Naive thymus-derived CD4-positive, alpha-beta T cell (primary cell): ENCODE measurements at regions of chr12 and their contacts with region 1.

Region 1: DNA sequence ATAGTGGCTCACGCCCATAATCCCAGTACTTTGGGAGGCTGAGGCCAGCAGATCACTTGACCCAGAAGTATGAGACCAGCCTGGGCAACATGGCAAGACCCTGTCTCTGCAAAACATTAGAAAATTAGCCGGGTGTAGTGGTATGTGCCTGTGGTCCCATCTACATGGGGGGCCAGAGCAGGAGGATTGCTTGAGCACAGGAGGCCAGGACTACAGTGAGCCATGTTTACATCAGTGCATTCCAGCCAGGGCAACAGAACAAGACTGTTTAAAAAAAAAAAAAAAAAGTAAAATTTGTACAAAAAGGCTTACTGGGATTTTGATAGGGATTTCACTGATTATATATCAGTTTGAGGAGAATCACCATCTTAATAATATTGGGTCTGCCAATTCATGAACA is 7.8 kb downstream of the HCFC2 start:
- DNase-seq: no peak
- ATAC-seq: no peak
- H3K4me3 ChIP-seq: no peak overlapping the region
- H3K4me3 Mint-ChIP-seq: no peak overlapping the region
- H3K27ac ChIP-seq: no peak overlapping the region
- H3K27ac Mint-ChIP-seq: no peak overlapping the region
- H3K4me1 ChIP-seq: no peaks in the 10 kb centered on the region
- H3K4me1 Mint-ChIP-seq: peaks cover 5 to 34% (median 30%) of the 10 kb centered on the region in 7 donors
- H3K27me3 ChIP-seq: no peaks in the 10 kb centered on the region
- H3K27me3 Mint-ChIP-seq: no peaks in the 10 kb centered on the region

Region 2: DNA sequence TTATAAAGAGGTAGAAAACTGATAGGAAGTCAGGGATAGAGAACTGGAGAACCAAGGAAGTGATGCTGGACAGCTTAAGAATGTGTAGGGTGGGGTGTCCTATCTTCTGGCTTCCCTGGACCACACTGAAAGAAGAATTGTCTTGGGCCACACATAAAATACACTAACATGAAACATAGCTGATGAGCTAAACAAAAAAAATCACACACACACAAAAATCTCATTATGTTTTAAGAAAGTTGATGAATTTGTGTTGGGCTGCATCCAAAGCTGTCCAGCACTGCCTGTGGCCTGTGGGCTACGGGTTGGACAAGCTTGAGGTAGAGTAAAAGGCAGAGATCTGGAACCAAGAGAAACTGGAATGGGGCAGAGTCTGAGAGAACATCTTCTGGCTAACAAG is 29.5 kb before region 1 on chr12:
- CTCF ChIA-PET with region 1: no interaction called
- POLR2A ChIA-PET with region 1: no interaction called
- intact Hi-C with region 1: no loop called
- DNase-seq: no peak
- ATAC-seq: no peak
- H3K4me3 ChIP-seq: no peak overlapping the region
- H3K4me3 Mint-ChIP-seq: no peak overlapping the region
- H3K27ac ChIP-seq: no peak overlapping the region
- H3K27ac Mint-ChIP-seq: peak overlapping the region in 1 of 9 donors; percentile 3
- H3K4me1 ChIP-seq: no peaks in the 10 kb centered on the region
- H3K4me1 Mint-ChIP-seq: peaks cover 0 to 3% (median 0%) of the 10 kb centered on the region in 7 donors
- H3K27me3 ChIP-seq: no peaks in the 10 kb centered on the region
- H3K27me3 Mint-ChIP-seq: peaks cover 0 to 17% (median 0%) of the 10 kb centered on the region in 5 donors

Region 3: DNA sequence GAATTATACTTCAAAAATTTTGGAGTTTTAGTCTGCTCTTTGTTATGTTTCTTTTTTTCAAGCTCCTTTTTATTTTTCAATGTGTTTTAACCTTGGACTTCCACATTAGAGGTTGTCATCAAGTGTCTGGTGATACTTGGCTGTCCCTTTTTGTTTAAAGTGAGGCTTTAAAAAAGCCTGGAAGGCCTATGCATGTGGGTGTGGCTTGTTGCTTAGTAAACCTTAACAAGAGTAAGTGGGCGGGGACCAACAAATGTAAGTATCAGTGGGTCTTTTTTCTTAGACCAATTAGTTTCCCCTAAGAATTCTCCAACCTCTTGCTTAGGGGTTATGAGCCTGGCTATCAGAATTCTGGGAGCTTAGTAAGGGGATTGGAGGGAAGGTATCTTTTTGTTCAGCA is 18.6 kb after region 1 on chr12:
- CTCF ChIA-PET with region 1: no interaction called
- POLR2A ChIA-PET with region 1: no interaction called
- intact Hi-C with region 1: loop called in 1 of 2 experiments (anchors 2 kb)
- DNase-seq: no peak
- ATAC-seq: no peak
- H3K4me3 ChIP-seq: no peak overlapping the region
- H3K4me3 Mint-ChIP-seq: no peak overlapping the region
- H3K27ac ChIP-seq: no peak overlapping the region
- H3K27ac Mint-ChIP-seq: no peak overlapping the region
- H3K4me1 ChIP-seq: no peaks in the 10 kb centered on the region
- H3K4me1 Mint-ChIP-seq: peaks cover 0 to 1% (median 0%) of the 10 kb centered on the region in 7 donors
- H3K27me3 ChIP-seq: no peaks in the 10 kb centered on the region
- H3K27me3 Mint-ChIP-seq: no peaks in the 10 kb centered on the region